ENCODE measurements at regions of chr18 and their contacts with region 1.

Region 1: DNA sequence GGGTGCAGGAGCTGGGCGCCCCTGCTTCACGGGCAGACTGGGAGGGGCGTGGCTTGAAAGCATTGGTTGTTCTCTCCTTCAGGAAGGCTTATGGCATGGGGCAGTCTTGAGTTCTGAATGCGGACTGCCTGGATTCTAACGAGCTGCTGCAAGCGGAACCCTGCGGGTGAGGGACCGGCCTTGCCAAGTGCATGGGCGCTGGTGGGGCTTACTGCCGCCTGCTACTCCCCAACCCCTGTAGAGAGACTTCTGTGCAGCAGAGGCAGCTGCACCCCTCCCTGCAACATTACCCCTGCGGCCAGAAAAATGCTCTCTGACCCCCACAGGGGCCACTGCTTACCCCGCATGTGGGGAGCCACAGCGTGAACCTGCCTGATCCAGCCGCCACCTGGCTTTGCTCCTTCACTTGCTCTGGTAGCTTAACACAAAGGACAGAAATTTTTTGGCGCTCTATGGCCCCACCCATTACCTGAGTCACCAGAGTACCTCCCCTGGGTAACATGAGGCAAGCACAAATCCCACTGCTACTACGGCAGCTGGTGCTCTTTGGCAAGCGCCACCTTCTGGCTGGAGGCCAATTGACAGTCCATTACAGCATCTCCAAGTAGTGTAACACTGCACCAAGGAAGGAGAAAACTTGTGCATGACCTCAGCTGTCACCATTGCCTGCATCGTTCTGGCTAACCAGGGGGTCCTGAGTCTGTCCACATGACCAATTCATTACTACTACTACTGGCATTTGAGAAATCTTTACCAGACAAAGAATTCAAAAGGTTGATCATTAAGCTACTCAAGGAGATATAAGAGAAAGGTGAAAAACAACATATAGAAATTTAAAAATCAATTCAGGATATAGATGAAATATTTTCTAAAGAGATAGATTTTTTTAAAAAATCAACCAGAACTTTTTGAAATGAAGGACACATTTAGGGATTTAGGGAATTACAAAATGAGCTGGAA is 35.4 kb downstream of the MYL12B start:
- DNase-seq: peak; percentile 89
- H3K4me3 Mint-ChIP-seq: peak overlapping the region; percentile 91
- H3K27ac Mint-ChIP-seq: peak overlapping the region; percentile 82
- H3K4me1 Mint-ChIP-seq: peaks cover 15% of the 10 kb centered on the region
- H3K27me3 Mint-ChIP-seq: peaks cover 33% of the 10 kb centered on the region

Region 2: DNA sequence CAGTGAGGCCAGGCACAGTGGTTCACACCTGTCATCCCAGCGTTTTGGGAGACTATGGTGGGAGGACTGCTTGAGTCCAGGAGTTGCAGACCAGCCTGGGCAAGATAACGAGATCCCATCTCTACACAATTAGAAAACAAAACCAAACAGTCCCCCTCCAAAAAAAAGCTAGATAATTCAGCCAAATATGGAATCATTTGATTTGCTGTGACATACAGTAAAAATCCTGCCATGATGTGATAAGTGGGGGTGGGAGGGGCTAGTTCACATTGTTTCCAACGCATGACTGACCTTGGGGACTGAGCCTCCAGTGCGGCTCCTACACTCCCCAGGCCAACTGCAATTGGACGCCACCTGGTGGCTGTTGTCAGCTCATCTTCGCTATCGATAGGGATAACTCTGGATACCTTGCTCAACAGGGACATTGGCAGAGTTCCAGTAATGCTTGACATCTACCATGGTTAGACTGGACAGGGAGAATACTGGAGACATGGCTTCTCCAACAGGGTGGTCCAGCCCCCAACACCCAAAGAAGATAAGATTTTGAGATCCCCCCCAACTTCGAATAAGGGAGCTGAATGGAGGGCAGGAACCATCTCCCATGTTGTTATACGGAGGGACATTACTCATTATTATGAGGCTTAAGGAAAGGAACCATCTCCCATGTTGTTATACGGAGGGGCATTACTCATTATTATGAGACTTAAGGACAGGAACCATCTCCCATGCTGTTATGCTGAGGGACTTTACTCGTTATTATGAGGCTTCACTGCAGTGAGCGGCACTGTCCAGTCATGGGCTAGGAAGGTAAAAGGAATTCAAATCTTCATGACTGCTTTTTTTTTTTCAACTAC is 288.6 kb after region 1 on chr18:
- intact Hi-C with region 1: loop called (anchors 2 kb)
- DNase-seq: peak; percentile 54
- H3K4me3 Mint-ChIP-seq: no peak overlapping the region
- H3K27ac Mint-ChIP-seq: peak overlapping the region; percentile 69
- H3K4me1 Mint-ChIP-seq: peaks cover 46% of the 10 kb centered on the region
- H3K27me3 Mint-ChIP-seq: peaks cover 3% of the 10 kb centered on the region

Measured in activated T-helper 1 cell treated with anti-CD3 and anti-CD28 coated beads, Interleukin-12 subunit alpha, Interleukin-12 subunit beta, Interleukin-2, Interleukin-4 antibody, amounts not matched to agents 30 ng/mL and 10 ng/mL and 1 ng/mL, durations not matched to agents 14 hours and 24 hours and 36 hours (primary cell).